Panc1 (cell line): ENCODE measurements at regions of chr19 and their contacts with region 1.

Region 1: DNA sequence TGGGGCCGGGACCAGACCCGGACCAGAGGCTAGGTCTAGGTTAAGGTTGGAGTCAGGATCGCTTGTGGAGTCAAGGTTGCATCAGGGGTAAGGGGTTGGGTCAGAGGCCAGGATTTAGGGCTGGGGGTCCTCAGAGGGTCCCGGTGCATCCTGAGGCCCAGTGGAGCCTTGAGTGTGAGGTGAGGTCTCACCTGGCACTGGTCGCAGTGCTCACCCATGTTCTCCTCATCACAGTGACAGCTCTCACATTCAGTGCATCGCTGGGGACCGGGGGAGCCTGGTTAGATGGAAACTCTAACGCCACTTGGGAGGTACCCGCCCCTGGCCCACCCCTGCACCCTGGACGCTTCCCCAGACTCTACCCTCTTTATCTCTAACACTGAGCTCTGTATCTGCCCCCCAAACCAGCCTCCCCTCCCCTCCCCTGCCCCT is 3.1 kb downstream of the HRC start:
- DNase-seq: no peak
- ATAC-seq: peak; percentile 38; the same call in 1 of the 2 replicates
- H3K4me3 ChIP-seq: peak overlapping the region; percentile 78 to 91
- H3K27ac ChIP-seq: no peak overlapping the region
- H3K4me1 ChIP-seq: no peaks in the 10 kb centered on the region; the same call in 1 of the 2 replicates
- H3K27me3 ChIP-seq: no peaks in the 10 kb centered on the region
- CTCF ChIP-seq: no peak

Region 2: DNA sequence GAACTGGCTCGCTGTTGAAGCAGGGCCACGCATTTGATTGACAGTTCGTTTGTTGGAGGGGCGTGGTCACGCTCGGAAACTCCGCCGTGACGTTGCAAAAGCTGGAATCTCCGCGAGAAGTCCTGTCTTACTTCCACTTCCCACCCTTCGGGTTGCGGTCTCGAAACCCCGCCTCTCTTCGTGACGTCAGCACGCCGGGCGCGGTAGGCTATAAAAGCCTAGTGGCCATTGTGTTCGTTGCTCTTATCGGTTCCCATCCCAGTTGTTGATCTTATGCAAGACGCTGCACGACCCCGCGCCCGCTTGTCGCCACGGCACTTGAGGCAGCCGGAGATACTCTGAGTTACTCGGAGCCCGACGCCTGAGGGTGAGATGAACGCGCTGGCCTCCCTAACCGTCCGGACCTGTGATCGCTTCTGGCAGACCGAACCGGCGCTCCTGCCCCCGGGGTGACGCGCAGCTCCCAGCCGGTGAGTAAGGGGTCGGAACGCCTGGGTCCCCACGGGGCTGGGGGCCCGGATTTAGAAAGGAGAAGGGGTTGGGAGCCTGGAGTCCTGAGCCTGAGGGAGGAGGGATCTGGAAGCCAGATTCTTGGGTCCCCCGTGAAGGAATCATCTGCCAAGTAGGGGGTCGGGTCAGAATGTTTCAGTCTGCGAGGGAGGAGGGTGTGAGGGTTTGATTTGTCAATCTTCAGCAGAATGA is 279.8 kb before region 1 on chr19 and contains the start of gene PPP1R15A:
- CTCF ChIA-PET with region 1: no interaction called
- POLR2A ChIA-PET with region 1: no interaction called
- in situ Hi-C with region 1: no loop called
- intact Hi-C with region 1: no loop called
- DNase-seq: peak; percentile 93
- ATAC-seq: peak; percentile 79
- H3K4me3 ChIP-seq: peak within 1 kb of the TSS; percentile 84 to 99
- H3K27ac ChIP-seq: peak within 1 kb of the TSS; percentile 93
- H3K4me1 ChIP-seq: peaks cover 16% of the 10 kb centered on the region
- H3K27me3 ChIP-seq: no peaks in the 10 kb centered on the region
- CTCF ChIP-seq: no peak
- total RNA-seq, gene PPP1R15A: 27.1 TPM

Region 3: GRCh38 chr19:48993175-48994034 is 158.7 kb before region 1 on chr19 and contains the starts of genes GYS1 and RUVBL2:
- CTCF ChIA-PET with region 1: no interaction called
- POLR2A ChIA-PET with region 1: interaction called, 10 read pairs
- in situ Hi-C with region 1: no loop called
- intact Hi-C with region 1: no loop called
- DNase-seq: peak; percentile 82
- ATAC-seq: peak; percentile 97
- H3K4me3 ChIP-seq: peak within 1 kb of the TSS; percentile 79 to 96
- H3K27ac ChIP-seq: peak within 1 kb of the TSS; percentile 95
- H3K4me1 ChIP-seq: no peaks in the 10 kb centered on the region
- H3K27me3 ChIP-seq: no peaks in the 10 kb centered on the region
- CTCF ChIP-seq: peak; percentile 94
- total RNA-seq, gene GYS1: 20.2 TPM
- total RNA-seq, gene RUVBL2: 170 TPM

Region 4: DNA sequence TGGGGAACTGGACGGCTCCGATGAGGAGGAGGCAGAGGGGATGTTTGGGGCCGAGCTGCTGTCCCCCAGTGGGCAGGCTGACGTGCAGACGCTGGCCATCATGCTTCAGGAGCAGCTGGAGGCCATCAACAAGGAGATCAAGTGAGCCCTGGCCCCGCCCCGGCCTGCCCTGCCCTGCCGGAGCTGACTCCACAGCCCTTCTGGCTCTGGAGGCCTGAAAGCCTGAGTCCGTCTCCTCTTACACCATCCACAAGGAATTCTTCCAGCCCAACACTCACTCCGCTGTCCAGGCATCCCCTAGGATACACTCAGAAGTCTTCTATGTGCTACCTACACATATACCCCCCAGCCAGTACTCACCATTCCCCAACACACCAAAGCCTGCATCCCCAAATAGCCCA is 15.4 kb before region 1 on chr19:
- CTCF ChIA-PET with region 1: no interaction called
- POLR2A ChIA-PET with region 1: no interaction called
- in situ Hi-C with region 1: no loop called
- intact Hi-C with region 1: no loop called
- DNase-seq: no peak
- ATAC-seq: no peak
- H3K4me3 ChIP-seq: no peak overlapping the region
- H3K27ac ChIP-seq: no peak overlapping the region
- H3K4me1 ChIP-seq: no peaks in the 10 kb centered on the region
- H3K27me3 ChIP-seq: no peaks in the 10 kb centered on the region
- CTCF ChIP-seq: no peak